ENCODE measurements at regions of chr14 and their contacts with region 1.

Region 1: DNA sequence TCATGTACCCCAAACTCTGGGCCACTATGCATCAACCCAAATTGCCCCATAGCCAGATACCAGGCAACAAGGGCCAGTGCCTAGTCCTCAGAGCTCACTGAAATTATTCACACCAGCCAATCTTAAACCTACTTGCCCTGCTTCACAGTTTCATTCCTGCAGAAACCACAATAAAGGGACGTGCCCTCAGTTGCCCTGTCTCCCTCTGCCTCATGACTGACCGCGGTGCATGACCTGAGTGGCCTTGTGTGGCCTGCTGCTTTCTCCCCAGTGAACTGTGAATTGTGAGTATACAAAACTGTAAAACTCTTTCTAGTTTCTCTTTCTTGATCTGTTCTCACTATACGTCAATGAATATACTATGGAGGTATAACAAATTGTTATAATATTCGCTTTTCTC is 490.9 kb upstream of the MIS18BP1 start:
- DNase-seq: no peak
- H3K4me3 ChIP-seq: no peak overlapping the region
- H3K27ac ChIP-seq: no peak overlapping the region
- H3K4me1 ChIP-seq: no peaks in the 10 kb centered on the region
- H3K27me3 ChIP-seq: no peaks in the 10 kb centered on the region
- CTCF ChIP-seq: no peak
- POLR2A ChIP-seq: no peak

Region 2: GRCh38 chr14:45716572-45716971 is 27.3 kb before region 1 on chr14:
- intact Hi-C with region 1: no loop called
- DNase-seq: no peak
- H3K4me3 ChIP-seq: no peak overlapping the region
- H3K27ac ChIP-seq: no peak overlapping the region
- H3K4me1 ChIP-seq: no peaks in the 10 kb centered on the region
- H3K27me3 ChIP-seq: no peaks in the 10 kb centered on the region
- CTCF ChIP-seq: no peak
- POLR2A ChIP-seq: no peak

Region 3: GRCh38 chr14:45728434-45729225 is 15.3 kb before region 1 on chr14:
- intact Hi-C with region 1: loop called (anchors 1 kb)
- DNase-seq: no peak
- H3K4me3 ChIP-seq: no peak overlapping the region
- H3K27ac ChIP-seq: no peak overlapping the region
- H3K4me1 ChIP-seq: no peaks in the 10 kb centered on the region
- H3K27me3 ChIP-seq: no peaks in the 10 kb centered on the region
- CTCF ChIP-seq: no peak
- POLR2A ChIP-seq: no peak